Psoas muscle (tissue), 8 donors: ENCODE measurements at regions of chr1 and their contacts with region 1.

Region 1: DNA sequence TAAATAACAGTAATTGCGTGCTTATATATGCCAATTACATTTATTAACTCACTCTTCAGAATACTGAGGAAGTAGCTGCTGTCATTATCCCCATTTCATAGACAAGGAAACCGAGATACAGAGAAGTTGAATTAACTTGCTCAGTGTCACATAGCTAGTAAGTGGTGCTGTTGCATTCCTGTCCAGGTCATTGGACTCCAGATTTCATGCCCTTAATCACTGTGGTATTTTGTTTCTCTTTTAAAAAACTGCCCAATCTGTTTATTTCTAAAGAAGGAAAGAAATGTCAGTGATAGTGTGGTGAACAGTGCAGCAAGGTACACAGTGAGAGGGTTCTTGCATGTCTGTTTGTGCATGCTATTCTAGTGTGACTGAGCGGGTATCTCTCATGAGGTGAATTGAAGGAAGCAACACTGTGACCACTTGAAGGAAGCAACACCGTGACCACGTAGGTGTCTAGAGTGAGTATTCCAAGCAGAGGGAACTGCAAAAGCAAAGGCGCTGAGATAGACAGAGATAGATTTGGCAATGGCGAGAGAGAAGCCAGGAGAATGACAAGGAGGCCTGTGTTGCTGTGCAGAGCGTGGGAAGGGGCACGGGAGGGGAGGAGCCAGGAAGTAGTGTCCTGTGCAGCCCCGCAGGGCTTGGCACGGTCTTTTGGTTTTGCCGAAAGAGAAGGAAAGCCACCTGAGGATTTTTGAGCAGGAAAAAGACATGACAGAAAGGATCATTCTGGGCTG is 95.9 kb downstream of the CAMTA1 start:
- DNase-seq: no peak
- ATAC-seq: no peak
- H3K4me3 ChIP-seq: no peak overlapping the region
- H3K27ac ChIP-seq: no peak overlapping the region
- H3K4me1 ChIP-seq: no peaks in the 10 kb centered on the region
- H3K27me3 ChIP-seq: no peaks in the 10 kb centered on the region
- CTCF ChIP-seq: no peak

Region 2: DNA sequence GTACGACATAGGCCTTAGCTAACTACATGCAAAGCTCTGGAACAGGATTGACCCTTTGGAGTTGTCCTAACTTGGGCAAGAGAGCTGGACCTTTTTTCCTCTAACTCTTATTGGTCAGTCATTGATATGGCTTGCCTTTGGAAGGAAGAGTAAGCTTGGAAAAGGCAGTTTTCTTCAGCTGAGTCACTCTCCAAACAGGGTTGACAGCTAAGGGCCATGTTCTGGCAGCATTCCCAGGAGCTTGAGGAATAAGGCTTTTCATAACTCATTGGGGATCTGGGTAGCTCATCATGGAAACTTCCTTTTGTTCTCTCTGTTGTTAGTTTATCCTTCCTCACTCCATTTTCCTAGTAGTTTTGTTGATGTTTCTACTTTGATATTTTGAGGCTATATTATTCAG is 1159.5 kb after region 1 on chr1:
- intact Hi-C with region 1: loop called in 1 of 2 experiments (anchors 5 kb)
- DNase-seq: peak; percentile 74 to 75
- ATAC-seq: peak in 3 of 4 donors; percentile 62 to 68 (median 65)
- H3K4me3 ChIP-seq: no peak overlapping the region
- H3K27ac ChIP-seq: peak overlapping the region; percentile 9
- H3K4me1 ChIP-seq: no peaks in the 10 kb centered on the region
- H3K27me3 ChIP-seq: peaks cover 0 to 2% (median 0%) of the 10 kb centered on the region in 3 donors
- CTCF ChIP-seq: no peak